Heart right ventricle (tissue), 16 donors: ENCODE measurements at regions of chr5 and their contacts with region 1.

Region 1: GRCh38 chr5:91419571-91420537 is 36.7 kb upstream of the ARRDC3 start:
- DNase-seq: peak; percentile 17 to 43
- ATAC-seq: no peak
- H3K4me3 ChIP-seq: no peak overlapping the region
- H3K27ac ChIP-seq: no peak overlapping the region
- H3K4me1 ChIP-seq: no peaks in the 10 kb centered on the region
- H3K27me3 ChIP-seq: no peaks in the 10 kb centered on the region
- CTCF ChIP-seq: peak; percentile 63 to 86 (median 81)

Region 2: DNA sequence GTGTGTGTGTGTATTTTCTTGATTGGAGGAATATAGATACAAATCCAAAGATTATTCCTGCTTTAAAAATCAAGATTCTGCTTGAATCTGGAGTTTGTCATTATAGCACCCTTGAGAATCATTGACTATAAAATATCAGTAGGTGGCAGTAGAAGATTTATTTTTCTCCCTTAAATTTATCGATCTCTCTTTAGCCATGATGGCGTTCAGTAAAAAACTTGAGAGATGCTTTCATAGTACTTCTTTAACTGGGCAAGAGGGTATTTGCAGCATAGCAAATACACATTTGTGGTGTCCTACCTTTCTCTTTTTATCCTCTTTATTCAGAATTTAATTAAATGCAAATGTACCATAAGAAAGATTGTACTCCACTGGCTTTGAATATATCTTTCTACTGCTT is 553.5 kb before region 1 on chr5:
- intact Hi-C with region 1: loop called (anchors 1 to 10 kb)
- DNase-seq: no peak
- ATAC-seq: peak in 4 of 8 donors; percentile 46 to 63 (median 61)
- H3K4me3 ChIP-seq: no peak overlapping the region
- H3K27ac ChIP-seq: no peak overlapping the region
- H3K4me1 ChIP-seq: peaks cover 0 to 20% (median 11%) of the 10 kb centered on the region in 9 donors
- H3K27me3 ChIP-seq: no peaks in the 10 kb centered on the region
- CTCF ChIP-seq: peak; percentile 28 to 70 (median 59)

Region 3: GRCh38 chr5:90878549-90879196 is 541.2 kb before region 1 on chr5:
- intact Hi-C with region 1: loop called in 1 of 10 experiments (anchors 10 kb)
- DNase-seq: peak in 1 of 2 donors; percentile 28
- ATAC-seq: peak in 7 of 8 donors; percentile 58 to 91 (median 85)
- H3K4me3 ChIP-seq: no peak overlapping the region
- H3K27ac ChIP-seq: peak overlapping the region in 8 of 10 donors; percentile 14 to 78 (median 62)
- H3K4me1 ChIP-seq: peaks cover 0 to 32% (median 20%) of the 10 kb centered on the region in 9 donors
- H3K27me3 ChIP-seq: no peaks in the 10 kb centered on the region
- CTCF ChIP-seq: no peak

Region 4: DNA sequence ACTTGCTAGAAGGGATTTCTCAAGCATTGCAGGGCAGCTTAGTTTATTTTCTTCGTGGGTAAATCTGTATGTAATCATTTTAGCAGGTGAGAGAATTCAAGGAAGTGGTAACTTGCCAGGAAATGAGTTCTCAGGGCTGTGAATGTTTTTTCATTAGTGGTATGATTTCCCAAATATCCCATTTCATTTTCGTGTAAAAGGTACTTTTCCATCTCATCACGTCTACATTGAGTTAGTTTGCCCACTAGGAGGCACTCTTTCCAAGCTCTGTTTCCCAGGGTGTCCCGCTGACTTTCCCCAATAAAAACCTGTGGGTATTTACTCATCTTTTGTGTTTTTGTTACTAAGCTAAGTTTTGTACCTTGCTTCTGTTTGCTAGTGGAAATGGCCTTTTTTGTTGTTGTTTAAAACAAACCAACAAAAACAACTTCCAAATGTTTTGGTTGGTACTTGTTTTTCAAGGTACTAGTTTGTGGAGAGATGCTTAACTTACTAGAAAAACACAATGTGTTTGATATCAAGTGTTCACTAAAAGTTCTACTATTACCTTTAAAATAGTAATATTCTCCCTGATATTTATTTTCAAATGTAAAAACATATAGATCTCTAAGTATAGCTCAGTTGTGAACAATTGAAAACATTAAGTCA is 487.7 kb before region 1 on chr5:
- intact Hi-C with region 1: loop called in 8 of 10 experiments (anchors 1 to 10 kb)
- DNase-seq: peak in 1 of 2 donors; percentile 63
- ATAC-seq: peak in 7 of 8 donors; percentile 51 to 84 (median 67)
- H3K4me3 ChIP-seq: no peak overlapping the region
- H3K27ac ChIP-seq: peak overlapping the region in 1 of 10 donors; percentile 25
- H3K4me1 ChIP-seq: peaks cover 0 to 15% (median 0%) of the 10 kb centered on the region in 9 donors
- H3K27me3 ChIP-seq: no peaks in the 10 kb centered on the region
- CTCF ChIP-seq: peak; percentile 54 to 87 (median 82)

Region 5: DNA sequence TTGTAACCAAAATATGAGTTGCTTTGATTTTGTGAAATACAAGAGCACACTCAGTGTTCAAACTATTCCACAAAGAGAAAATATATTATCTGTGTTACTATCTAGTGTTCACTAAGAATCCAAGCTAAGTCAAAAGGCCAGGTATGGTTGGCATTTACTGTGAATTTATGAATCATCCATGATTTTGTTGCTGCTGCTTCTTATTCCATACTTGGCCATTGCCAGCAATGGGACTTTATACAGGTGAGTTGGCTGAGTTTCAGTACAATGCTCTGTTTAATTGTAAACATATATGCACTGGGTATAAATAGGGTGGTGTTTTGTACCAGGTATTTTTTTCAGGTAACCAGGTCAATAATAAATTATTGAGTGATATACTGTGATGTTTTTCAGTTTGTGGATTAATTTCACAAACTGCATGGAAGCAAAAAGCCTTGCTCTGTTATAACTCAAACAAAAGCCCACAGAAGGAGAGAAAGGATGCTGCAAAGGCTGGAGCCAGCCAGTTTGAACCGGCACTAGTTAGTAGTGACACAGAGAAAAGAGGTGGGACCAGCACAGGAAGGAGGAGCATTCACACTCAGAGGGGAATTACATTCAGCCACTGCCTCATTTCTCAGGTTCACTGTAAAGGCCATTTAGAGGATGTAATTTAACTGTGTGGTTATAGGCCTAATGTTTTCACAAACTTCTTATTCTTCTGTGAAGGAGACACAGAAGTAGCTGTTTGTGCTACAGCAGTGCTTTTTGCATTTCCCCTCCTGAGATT is 479.4 kb before region 1 on chr5:
- intact Hi-C with region 1: loop called in 4 of 10 experiments (anchors 5 to 10 kb)
- DNase-seq: no peak
- ATAC-seq: no peak
- H3K4me3 ChIP-seq: no peak overlapping the region
- H3K27ac ChIP-seq: no peak overlapping the region
- H3K4me1 ChIP-seq: peaks cover 0 to 6% (median 0%) of the 10 kb centered on the region in 9 donors
- H3K27me3 ChIP-seq: no peaks in the 10 kb centered on the region
- CTCF ChIP-seq: no peak